ENCODE measurements at regions of chr10 and their contacts with region 1.

Region 1: DNA sequence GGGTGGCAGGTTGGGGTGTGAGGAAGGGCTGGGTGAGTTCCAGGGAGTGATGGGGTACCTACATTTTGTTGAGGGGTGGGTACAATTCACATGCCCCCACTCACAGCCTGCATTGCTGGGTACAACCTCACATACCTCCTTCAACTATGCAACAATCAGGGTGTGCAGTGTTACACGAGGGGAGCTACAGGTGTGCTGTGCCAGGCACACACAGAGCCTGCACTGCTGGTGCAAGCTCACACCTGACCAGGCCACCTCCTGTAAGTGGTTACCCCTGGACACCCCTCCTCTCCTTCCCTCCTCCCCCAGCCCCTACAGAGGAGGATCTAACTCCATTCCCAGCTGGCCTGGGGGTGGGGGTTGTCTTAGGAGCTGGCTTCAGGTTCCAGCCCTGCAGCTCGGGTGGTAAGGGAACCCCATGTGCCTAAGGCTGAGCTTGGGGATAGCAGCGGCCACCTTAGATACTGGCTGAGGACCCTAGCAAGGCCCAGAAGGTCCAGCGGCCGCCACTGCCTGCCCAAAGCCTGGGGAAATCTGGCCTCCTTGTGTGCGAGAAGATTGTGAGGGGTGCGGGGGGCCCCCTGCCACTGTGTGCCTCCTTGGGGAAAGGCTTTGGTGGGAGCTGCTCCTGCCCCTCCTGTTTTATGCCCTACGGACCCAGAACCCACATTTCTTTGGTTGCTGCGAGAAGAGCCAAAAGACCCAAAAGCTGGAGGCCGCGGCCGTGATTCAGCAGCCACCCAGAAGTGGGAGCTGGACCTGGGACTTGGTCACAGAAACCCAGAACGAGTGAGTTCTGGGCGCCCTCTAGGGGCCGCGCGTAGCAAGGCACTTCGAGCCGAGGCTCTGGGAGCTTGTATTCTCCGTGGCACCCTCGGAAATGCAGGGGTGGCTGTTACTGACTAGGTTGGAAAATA is 10.8 kb downstream of the TLX1 start:
- DNase-seq: peak; percentile 71 to 75 (median 72)
- H3K4me3 ChIP-seq: no peak overlapping the region
- H3K4me3 Mint-ChIP-seq: peak overlapping the region in 3 of 8 donors; percentile 47 to 68 (median 48)
- H3K27ac ChIP-seq: no peak overlapping the region
- H3K27ac Mint-ChIP-seq: no peak overlapping the region
- H3K4me1 ChIP-seq: peaks cover 31% of the 10 kb centered on the region
- H3K4me1 Mint-ChIP-seq: peaks cover 8 to 39% (median 22%) of the 10 kb centered on the region in 4 donors
- H3K27me3 ChIP-seq: peaks cover 79% of the 10 kb centered on the region
- H3K27me3 Mint-ChIP-seq: peaks cover 64 to 82% of the 10 kb centered on the region in 2 donors

Region 2: GRCh38 chr10:99172130-99172738 is 1969.6 kb before region 1 on chr10:
- CTCF ChIA-PET with region 1: no interaction called
- POLR2A ChIA-PET with region 1: no interaction called
- intact Hi-C with region 1: no loop called
- DNase-seq: no peak
- H3K4me3 ChIP-seq: no peak overlapping the region
- H3K4me3 Mint-ChIP-seq: no peak overlapping the region
- H3K27ac ChIP-seq: no peak overlapping the region
- H3K27ac Mint-ChIP-seq: no peak overlapping the region
- H3K4me1 ChIP-seq: no peaks in the 10 kb centered on the region
- H3K4me1 Mint-ChIP-seq: no peaks in the 10 kb centered on the region
- H3K27me3 ChIP-seq: no peaks in the 10 kb centered on the region
- H3K27me3 Mint-ChIP-seq: peaks cover 2 to 3% of the 10 kb centered on the region in 2 donors

Region 3: DNA sequence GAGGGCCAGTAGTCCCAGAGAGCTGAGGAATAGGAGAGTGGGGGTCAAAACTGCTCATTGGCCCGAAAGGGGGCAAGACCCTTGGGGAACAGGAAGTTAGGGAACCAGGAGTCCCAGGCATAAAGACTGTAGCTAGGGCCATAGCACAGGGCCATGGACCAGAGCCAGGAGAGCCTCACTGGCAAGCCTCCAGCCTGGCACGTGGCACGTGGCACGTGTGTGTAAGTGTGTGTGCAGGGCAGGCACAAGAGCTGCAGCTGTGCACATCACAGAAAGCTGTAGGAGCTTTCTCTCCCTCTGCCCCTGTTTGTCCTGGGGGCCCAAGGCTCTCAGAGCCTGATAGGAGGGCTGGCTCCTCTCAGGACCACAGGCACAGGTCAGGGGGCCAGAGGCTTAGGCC is 276.9 kb before region 1 on chr10:
- CTCF ChIA-PET with region 1: no interaction called
- POLR2A ChIA-PET with region 1: no interaction called
- intact Hi-C with region 1: no loop called
- DNase-seq: no peak
- H3K4me3 ChIP-seq: no peak overlapping the region
- H3K4me3 Mint-ChIP-seq: no peak overlapping the region
- H3K27ac ChIP-seq: no peak overlapping the region
- H3K27ac Mint-ChIP-seq: no peak overlapping the region
- H3K4me1 ChIP-seq: no peaks in the 10 kb centered on the region
- H3K4me1 Mint-ChIP-seq: peaks cover 0 to 6% (median 3%) of the 10 kb centered on the region in 4 donors
- H3K27me3 ChIP-seq: peaks cover 4% of the 10 kb centered on the region
- H3K27me3 Mint-ChIP-seq: peaks cover 32 to 37% of the 10 kb centered on the region in 2 donors

Region 4: GRCh38 chr10:100939763-100940344 is 202.0 kb before region 1 on chr10:
- CTCF ChIA-PET with region 1: no interaction called
- POLR2A ChIA-PET with region 1: no interaction called
- intact Hi-C with region 1: no loop called
- DNase-seq: no peak
- H3K4me3 ChIP-seq: no peak overlapping the region
- H3K4me3 Mint-ChIP-seq: no peak overlapping the region
- H3K27ac ChIP-seq: no peak overlapping the region
- H3K27ac Mint-ChIP-seq: peak overlapping the region in 1 of 7 donors; percentile 14
- H3K4me1 ChIP-seq: peaks cover 17% of the 10 kb centered on the region
- H3K4me1 Mint-ChIP-seq: peaks cover 17 to 26% (median 19%) of the 10 kb centered on the region in 4 donors
- H3K27me3 ChIP-seq: no peaks in the 10 kb centered on the region
- H3K27me3 Mint-ChIP-seq: no peaks in the 10 kb centered on the region

Region 5: DNA sequence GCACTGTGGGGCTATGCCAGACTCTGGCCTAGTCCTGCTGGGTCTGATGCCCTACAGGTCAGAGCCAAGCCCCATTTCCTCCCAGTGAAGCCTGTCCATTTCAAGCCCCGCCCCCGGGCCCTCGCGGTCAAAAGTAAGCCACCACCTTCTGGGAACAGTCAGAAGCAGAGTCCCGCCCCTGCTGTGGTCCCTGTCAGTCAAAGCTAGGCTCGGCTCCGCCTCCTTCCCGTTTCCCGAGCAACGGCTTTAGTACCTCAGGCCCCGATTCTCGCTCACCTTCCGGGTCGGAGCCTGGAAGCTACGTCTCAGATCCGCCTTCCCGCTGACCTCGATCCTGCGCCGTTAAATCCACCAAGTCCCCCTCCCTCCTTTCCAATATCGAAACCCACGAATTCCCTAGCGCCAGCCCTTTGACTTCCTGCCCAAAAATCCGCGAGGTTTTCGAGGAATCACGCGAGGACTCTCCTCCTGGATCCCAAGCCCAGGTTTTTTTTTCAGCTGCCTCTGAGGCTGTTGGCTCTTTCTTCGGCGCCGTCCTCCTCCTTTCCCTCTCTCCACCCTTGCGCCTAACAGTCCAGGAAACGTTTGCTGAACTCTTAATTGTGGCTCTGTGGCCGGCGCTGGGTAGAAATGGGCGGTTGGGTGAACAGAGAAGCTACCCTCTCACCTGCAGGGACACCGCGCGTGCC is 99.1 kb before region 1 on chr10:
- CTCF ChIA-PET with region 1: interaction called, 5 read pairs
- POLR2A ChIA-PET with region 1: interaction called, 4 read pairs
- intact Hi-C with region 1: loop called (anchors 5 kb)
- DNase-seq: peak; percentile 64 to 84 (median 68)
- H3K4me3 ChIP-seq: peak overlapping the region; percentile 81 to 94
- H3K4me3 Mint-ChIP-seq: peak overlapping the region; percentile 92 to 99 (median 97)
- H3K27ac ChIP-seq: peak overlapping the region; percentile 68
- H3K27ac Mint-ChIP-seq: peak overlapping the region; percentile 87 to 99 (median 97)
- H3K4me1 ChIP-seq: peaks cover 27% of the 10 kb centered on the region
- H3K4me1 Mint-ChIP-seq: peaks cover 16 to 25% (median 19%) of the 10 kb centered on the region in 4 donors
- H3K27me3 ChIP-seq: peaks cover under 1% of the 10 kb centered on the region
- H3K27me3 Mint-ChIP-seq: peaks cover 11 to 12% of the 10 kb centered on the region in 2 donors

Region 6: GRCh38 chr10:101060036-101060950 is 81.6 kb before region 1 on chr10:
- CTCF ChIA-PET with region 1: interaction called, 11 read pairs
- POLR2A ChIA-PET with region 1: no interaction called
- intact Hi-C with region 1: loop called (anchors 1 kb)
- DNase-seq: peak; percentile 80 to 98 (median 94)
- H3K4me3 ChIP-seq: peak overlapping the region; percentile 99 to 100
- H3K4me3 Mint-ChIP-seq: peak overlapping the region; percentile 92 to 98 (median 95)
- H3K27ac ChIP-seq: peak overlapping the region; percentile 92
- H3K27ac Mint-ChIP-seq: peak overlapping the region; percentile 88 to 99 (median 98)
- H3K4me1 ChIP-seq: peaks cover 28% of the 10 kb centered on the region
- H3K4me1 Mint-ChIP-seq: peaks cover 14 to 35% (median 22%) of the 10 kb centered on the region in 4 donors
- H3K27me3 ChIP-seq: peaks cover 23% of the 10 kb centered on the region
- H3K27me3 Mint-ChIP-seq: peaks cover 14 to 17% of the 10 kb centered on the region in 2 donors

Region 7: DNA sequence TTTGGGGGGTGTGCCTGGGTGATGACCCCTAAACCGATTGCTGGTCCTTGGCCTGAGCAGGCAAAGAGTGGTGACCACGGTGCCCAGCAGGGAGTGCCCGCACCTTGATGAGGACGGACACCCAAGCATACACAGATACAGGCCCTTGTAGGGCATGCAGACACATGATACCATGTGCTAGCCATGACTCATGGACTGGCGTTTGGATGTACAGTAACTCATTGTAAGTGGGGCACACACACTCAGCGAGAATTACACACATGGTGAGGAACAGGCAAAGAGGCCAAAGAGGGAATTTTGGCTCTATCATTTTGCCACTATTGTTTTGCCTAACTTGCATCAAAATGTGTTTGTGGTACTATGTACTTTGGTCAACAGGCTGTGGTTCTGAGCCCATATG is 56.0 kb before region 1 on chr10:
- CTCF ChIA-PET with region 1: interaction called, 463 read pairs
- POLR2A ChIA-PET with region 1: no interaction called
- intact Hi-C with region 1: no loop called
- DNase-seq: no peak
- H3K4me3 ChIP-seq: no peak overlapping the region
- H3K4me3 Mint-ChIP-seq: no peak overlapping the region
- H3K27ac ChIP-seq: no peak overlapping the region
- H3K27ac Mint-ChIP-seq: no peak overlapping the region
- H3K4me1 ChIP-seq: no peaks in the 10 kb centered on the region
- H3K4me1 Mint-ChIP-seq: no peaks in the 10 kb centered on the region
- H3K27me3 ChIP-seq: peaks cover 28% of the 10 kb centered on the region
- H3K27me3 Mint-ChIP-seq: peaks cover 35 to 52% of the 10 kb centered on the region in 2 donors

Region 8: GRCh38 chr10:101120884-101121653 is 20.8 kb before region 1 on chr10:
- CTCF ChIA-PET with region 1: interaction called, 55 read pairs
- POLR2A ChIA-PET with region 1: interaction called, 8 read pairs
- intact Hi-C with region 1: loop called (anchors 2 kb)
- DNase-seq: peak in 4 of 5 donors; percentile 46 to 54 (median 48)
- H3K4me3 ChIP-seq: peak overlapping the region; percentile 62 to 84
- H3K4me3 Mint-ChIP-seq: peak overlapping the region; percentile 94 to 99 (median 98)
- H3K27ac ChIP-seq: no peak overlapping the region
- H3K27ac Mint-ChIP-seq: peak overlapping the region; percentile 62 to 94 (median 87)
- H3K4me1 ChIP-seq: peaks cover 30% of the 10 kb centered on the region
- H3K4me1 Mint-ChIP-seq: peaks cover 13 to 32% (median 25%) of the 10 kb centered on the region in 4 donors
- H3K27me3 ChIP-seq: peaks cover 36% of the 10 kb centered on the region
- H3K27me3 Mint-ChIP-seq: peaks cover 22 to 42% of the 10 kb centered on the region in 2 donors

Region 9: GRCh38 chr10:101155896-101156295 is 14.0 kb after region 1 on chr10:
- CTCF ChIA-PET with region 1: interaction called, 20 read pairs
- POLR2A ChIA-PET with region 1: no interaction called
- intact Hi-C with region 1: no loop called
- DNase-seq: no peak
- H3K4me3 ChIP-seq: no peak overlapping the region
- H3K4me3 Mint-ChIP-seq: no peak overlapping the region
- H3K27ac ChIP-seq: no peak overlapping the region
- H3K27ac Mint-ChIP-seq: no peak overlapping the region
- H3K4me1 ChIP-seq: no peaks in the 10 kb centered on the region
- H3K4me1 Mint-ChIP-seq: no peaks in the 10 kb centered on the region
- H3K27me3 ChIP-seq: no peaks in the 10 kb centered on the region
- H3K27me3 Mint-ChIP-seq: peaks cover 17 to 39% of the 10 kb centered on the region in 2 donors

Measured in CD4-positive, alpha-beta memory T cell (primary cell).